ENCODE measurements at regions of chr16 and their contacts with region 1.

Region 1: DNA sequence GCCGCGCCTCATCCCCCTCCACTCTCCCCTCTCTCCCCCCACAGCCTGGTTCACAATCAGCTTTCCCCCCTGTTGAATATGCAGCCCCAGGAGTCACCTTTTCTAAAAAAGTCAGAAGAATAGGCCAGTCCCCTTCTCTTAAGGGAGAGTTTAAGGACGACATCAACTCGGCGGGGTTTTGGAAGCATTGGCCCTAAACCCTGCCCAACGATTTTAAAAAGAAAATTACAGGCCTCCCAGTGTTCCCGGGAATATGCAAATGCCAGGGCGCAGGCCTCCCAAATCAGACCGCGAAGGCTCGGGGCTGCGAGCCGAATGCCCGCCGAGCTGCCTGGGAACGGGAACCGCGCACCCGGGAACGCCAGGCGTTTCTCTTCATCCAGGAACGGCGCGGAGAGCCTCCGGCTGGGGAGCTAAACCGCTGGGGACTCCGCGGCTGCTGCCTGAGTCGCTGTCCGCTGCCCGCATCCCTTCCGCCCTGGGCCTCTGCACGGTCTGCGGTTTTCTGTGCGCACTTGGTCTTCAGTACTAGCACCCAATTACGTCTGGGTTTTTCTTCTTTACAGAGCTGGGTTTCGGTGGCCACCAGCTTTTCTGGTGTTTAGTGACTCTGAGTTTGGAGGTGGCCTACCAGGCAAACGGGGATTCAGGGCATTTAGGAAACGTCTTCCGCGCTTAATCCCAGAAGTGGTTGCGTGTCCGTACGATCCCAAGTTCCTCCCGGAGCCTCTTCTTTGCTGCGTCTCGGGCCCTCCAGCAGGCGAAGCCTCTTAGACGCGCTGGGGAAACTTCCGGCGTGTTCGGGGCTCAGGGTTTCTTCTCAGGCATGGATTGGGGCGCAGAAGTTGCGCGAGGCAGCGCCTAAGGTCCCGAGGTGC is 5.7 kb downstream of the IRX5 start:
- DNase-seq: no peak
- H3K4me3 ChIP-seq: no peak overlapping the region
- H3K27ac ChIP-seq: no peak overlapping the region
- H3K4me1 ChIP-seq: peaks cover 6% of the 10 kb centered on the region
- H3K27me3 ChIP-seq: no peaks in the 10 kb centered on the region
- CTCF ChIP-seq: no peak

Region 2: GRCh38 chr16:53945996-53946395 is 990.3 kb before region 1 on chr16:
- CTCF ChIA-PET with region 1: interaction called, 10 read pairs
- POLR2A ChIA-PET with region 1: no interaction called
- intact Hi-C with region 1: no loop called
- DNase-seq: peak; percentile 3 to 43
- H3K4me3 ChIP-seq: no peak overlapping the region
- H3K27ac ChIP-seq: no peak overlapping the region
- H3K4me1 ChIP-seq: peaks cover 23% of the 10 kb centered on the region
- H3K27me3 ChIP-seq: no peaks in the 10 kb centered on the region
- CTCF ChIP-seq: peak; percentile 77